GM12878 (cell line): ENCODE measurements at regions of chr3 and their contacts with region 1.

Region 1: DNA sequence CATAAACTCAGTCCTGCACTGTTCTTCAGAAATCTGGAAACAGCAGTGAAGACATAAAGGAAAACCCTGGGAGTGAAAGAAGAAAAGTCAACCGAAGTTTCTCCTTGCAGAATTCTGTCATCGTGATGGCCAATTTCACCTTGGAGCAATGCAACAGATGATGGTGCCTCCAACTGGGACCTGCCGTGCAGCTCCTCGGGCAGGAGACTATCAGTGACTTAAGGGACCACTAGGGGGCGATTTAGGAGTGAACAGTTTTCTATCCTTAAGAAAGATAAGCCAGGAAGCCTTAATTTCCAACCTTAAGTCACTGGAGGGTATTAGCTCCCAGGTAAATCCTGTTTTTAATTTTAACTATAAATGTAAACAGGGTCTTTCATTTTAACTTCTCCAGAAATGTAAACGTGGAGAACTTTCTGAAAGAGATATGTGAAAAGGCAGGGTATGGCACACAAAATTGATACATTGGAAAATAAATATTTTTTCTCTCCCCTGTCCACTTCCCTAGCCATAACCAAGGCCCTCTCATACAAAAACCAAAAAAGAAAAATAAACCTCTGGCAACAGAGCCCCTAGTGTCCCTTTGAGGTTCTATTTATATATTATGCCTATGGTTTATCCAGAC is 116.3 kb downstream of the PDZRN3 start:
- DNase-seq: no peak
- ATAC-seq: peak; percentile 83
- H3K4me3 ChIP-seq: no peak overlapping the region
- H3K27ac ChIP-seq: no peak overlapping the region
- H3K4me1 ChIP-seq: peaks cover 10% of the 10 kb centered on the region; the same call in 1 of the 2 replicates
- H3K27me3 ChIP-seq: no peaks in the 10 kb centered on the region
- CTCF ChIP-seq: peak; percentile 69 to 82 (median 81)
- EP300 ChIP-seq: no peak
- POLR2A ChIP-seq: no peak
- RAD21 ChIP-seq: peak; percentile 62

Region 2: DNA sequence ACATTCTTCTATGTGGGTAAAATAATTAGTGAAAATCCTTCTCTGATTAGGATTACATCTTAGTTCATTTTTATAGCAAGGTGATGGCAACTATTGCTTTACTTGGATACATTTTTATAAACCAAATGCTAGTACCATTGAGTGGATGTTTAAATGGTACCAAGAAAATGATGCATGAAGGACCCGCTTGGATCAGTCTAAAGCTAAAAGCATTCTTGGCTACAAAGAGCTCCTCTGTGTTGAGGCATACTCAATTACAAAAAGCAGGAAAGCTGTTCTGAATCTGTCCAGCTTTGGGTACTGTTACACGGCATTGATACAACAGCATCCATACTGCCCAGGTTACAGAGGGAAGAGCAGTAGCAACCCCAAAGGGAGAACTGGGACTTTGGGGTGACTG is 100.9 kb before region 1 on chr3:
- CTCF ChIA-PET with region 1: no interaction called
- POLR2A ChIA-PET with region 1: no interaction called
- RAD21 ChIA-PET with region 1: no interaction called
- SMC1A ChIA-PET with region 1: no interaction called
- in situ Hi-C with region 1: no loop called
- intact Hi-C with region 1: no loop called
- DNase-seq: no peak
- ATAC-seq: no peak
- H3K4me3 ChIP-seq: no peak overlapping the region
- H3K27ac ChIP-seq: no peak overlapping the region
- H3K4me1 ChIP-seq: no peaks in the 10 kb centered on the region
- H3K27me3 ChIP-seq: peaks cover 0 to 1% of the 10 kb centered on the region in 2 experiments; a peak in 1 of 4 replicates
- CTCF ChIP-seq: no peak
- EP300 ChIP-seq: no peak
- POLR2A ChIP-seq: no peak
- RAD21 ChIP-seq: no peak

Region 3: GRCh38 chr3:73674280-73674679 is 165.8 kb after region 1 on chr3:
- CTCF ChIA-PET with region 1: no interaction called
- POLR2A ChIA-PET with region 1: no interaction called
- RAD21 ChIA-PET with region 1: no interaction called
- SMC1A ChIA-PET with region 1: no interaction called
- in situ Hi-C with region 1: no loop called
- intact Hi-C with region 1: no loop called
- DNase-seq: no peak
- ATAC-seq: no peak
- H3K4me3 ChIP-seq: no peak overlapping the region
- H3K27ac ChIP-seq: no peak overlapping the region
- H3K4me1 ChIP-seq: no peaks in the 10 kb centered on the region
- H3K27me3 ChIP-seq: no peaks in the 10 kb centered on the region; a peak in 1 of 4 replicates
- CTCF ChIP-seq: no peak
- EP300 ChIP-seq: no peak
- POLR2A ChIP-seq: no peak
- RAD21 ChIP-seq: no peak

Region 4: GRCh38 chr3:73848173-73848906 is 339.9 kb after region 1 on chr3:
- CTCF ChIA-PET with region 1: interaction called, 9 read pairs
- POLR2A ChIA-PET with region 1: no interaction called
- RAD21 ChIA-PET with region 1: interaction called, 4 read pairs
- SMC1A ChIA-PET with region 1: interaction called, 8 read pairs
- in situ Hi-C with region 1: no loop called
- intact Hi-C with region 1: loop called (anchors 1 kb)
- DNase-seq: no peak
- ATAC-seq: 0 out of 3 replicates have a peak, but pooled peaks have one; percentile 36
- H3K4me3 ChIP-seq: no peak overlapping the region
- H3K27ac ChIP-seq: no peak overlapping the region
- H3K4me1 ChIP-seq: no peaks in the 10 kb centered on the region
- H3K27me3 ChIP-seq: no peaks in the 10 kb centered on the region
- CTCF ChIP-seq: peak; percentile 30 to 44 (median 35); a peak in 4 of 6 replicates
- EP300 ChIP-seq: no peak
- POLR2A ChIP-seq: no peak
- RAD21 ChIP-seq: peak; percentile 49

Region 5: DNA sequence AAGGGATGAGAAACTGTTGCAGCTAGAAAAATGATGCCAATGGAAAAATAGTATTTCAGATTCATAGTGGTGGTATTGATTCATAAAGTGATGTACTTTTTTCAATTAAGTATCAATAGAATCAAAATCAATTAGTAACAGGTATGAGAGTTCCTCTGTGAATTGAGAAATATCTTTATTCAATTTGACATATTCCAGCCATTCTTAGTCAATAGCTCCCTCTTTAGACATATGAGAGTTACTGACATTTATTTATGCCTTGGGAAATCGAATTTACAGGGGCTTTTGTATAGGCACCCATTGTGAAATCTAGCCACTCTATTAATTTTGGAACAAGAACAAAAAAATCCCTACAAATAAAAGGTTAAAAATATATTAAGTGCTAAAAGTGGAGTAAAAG is 1492.9 kb after region 1 on chr3:
- CTCF ChIA-PET with region 1: interaction called, 10 read pairs
- POLR2A ChIA-PET with region 1: no interaction called
- RAD21 ChIA-PET with region 1: interaction called, 4 read pairs
- SMC1A ChIA-PET with region 1: interaction called, 4 read pairs
- in situ Hi-C with region 1: no loop called
- intact Hi-C with region 1: no loop called
- DNase-seq: no peak
- ATAC-seq: no peak
- H3K4me3 ChIP-seq: no peak overlapping the region
- H3K27ac ChIP-seq: no peak overlapping the region
- H3K4me1 ChIP-seq: no peaks in the 10 kb centered on the region
- H3K27me3 ChIP-seq: no peaks in the 10 kb centered on the region
- CTCF ChIP-seq: no peak; a peak in 1 of 6 replicates
- EP300 ChIP-seq: no peak
- POLR2A ChIP-seq: no peak
- RAD21 ChIP-seq: peak; percentile 36